ENCODE measurements at regions of chr3 and their contacts with region 1.

Region 1: DNA sequence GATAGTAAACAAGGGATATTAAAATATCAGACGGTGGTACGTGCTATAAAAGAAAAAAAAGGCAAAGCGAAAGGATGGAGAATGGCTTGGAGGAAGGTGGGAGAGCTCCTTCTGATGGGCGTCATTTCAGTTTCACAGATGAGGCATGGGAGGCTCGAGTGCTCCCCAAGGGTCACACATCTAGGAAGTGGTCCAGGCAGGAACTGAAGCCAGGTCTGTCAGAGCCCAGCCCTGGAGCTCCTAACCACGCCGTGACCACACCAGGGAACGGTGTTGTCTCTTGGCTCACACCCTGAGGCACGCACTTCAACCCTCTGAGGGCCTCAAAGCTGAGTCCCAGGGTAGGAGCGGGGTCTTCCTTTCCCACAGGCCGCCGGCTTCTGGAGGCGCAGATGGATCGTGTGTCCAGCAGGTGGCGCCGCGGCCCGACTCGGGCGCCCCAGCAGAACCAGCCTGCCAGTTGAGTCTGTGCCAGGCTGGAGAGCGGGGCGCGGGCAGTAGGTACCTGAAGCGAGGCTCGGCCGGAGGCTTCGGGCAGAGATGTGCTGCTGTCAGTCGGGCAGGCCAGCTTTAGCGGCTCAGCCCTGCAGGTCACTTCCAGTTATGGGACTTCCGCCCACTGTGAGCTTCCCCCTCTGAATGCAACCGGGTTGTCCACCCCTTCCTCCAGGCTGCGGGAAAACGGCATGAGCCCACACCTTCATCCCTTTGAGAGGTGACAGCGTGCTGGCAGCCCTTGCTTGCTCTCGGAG is 68.1 kb downstream of the SLC6A1 start:
- DNase-seq: peak; percentile 56
- H3K4me3 Mint-ChIP-seq: no peak overlapping the region
- H3K27ac Mint-ChIP-seq: no peak overlapping the region
- H3K4me1 Mint-ChIP-seq: peaks cover 3% of the 10 kb centered on the region
- H3K27me3 Mint-ChIP-seq: peaks cover 21% of the 10 kb centered on the region

Region 2: DNA sequence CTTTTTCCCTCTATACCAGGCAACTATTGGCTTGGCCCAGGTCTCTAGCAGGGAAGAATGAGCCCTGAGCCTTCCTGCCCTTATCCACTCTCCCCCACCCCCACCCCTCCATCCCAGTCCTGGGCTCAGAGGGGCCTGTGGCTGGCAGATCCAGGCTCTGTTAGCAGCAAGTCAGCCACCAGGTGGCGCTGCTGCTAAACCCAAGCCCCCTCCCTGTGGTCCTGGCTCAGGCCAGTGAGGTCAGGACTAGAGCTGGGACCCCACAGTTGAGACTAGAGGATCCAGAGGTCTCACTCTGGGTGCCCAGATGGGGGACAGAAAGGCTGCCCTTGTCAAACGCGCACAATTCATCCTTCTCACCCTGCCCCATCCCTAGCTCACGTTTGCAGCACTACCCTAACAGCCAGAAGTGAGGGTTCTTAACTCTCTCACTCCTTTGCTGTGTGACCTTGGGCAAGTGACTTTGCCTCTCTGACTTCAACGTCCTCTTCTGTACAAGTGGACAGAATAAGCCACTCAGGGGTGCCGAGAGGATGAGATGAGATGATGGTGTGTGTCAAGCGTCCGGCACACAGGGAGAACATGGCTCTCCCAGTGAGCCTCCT is 114.9 kb before region 1 on chr3:
- CTCF ChIA-PET with region 1: interaction called, 39 read pairs
- DNase-seq: peak; percentile 72
- H3K4me3 Mint-ChIP-seq: no peak overlapping the region
- H3K27ac Mint-ChIP-seq: no peak overlapping the region
- H3K4me1 Mint-ChIP-seq: no peaks in the 10 kb centered on the region
- H3K27me3 Mint-ChIP-seq: peaks cover 18% of the 10 kb centered on the region

Region 3: DNA sequence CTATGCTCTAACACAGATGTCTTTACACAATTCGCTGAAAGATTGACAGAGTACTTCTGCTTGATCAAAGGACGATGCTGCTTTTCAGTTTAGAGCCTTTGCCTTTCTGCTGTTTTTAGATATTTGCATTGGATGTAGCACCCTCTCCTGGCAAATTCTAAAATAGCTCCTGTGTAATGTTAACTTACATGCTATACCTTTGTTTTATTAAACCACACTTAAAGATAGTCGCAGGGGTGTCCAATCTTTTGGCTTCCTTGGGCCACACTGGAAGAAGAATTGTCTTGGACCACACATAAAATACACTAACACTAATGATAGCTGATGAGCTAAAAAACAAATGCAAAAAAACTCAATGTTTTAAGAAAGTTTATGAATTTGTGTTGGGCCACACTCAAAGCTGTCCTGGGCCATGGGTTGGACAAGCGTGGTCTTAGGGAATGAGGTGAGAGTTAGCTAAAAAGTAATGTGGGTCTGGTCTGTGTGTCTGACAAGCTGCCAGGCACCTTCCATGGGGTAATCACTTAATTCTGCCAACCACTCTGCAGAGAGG is 274.5 kb after region 1 on chr3:
- CTCF ChIA-PET with region 1: interaction called, 39 read pairs
- DNase-seq: peak; percentile 24
- H3K4me3 Mint-ChIP-seq: no peak overlapping the region
- H3K27ac Mint-ChIP-seq: no peak overlapping the region
- H3K4me1 Mint-ChIP-seq: no peaks in the 10 kb centered on the region
- H3K27me3 Mint-ChIP-seq: no peaks in the 10 kb centered on the region

Region 4: GRCh38 chr3:11651900-11652299 is 591.2 kb after region 1 on chr3:
- CTCF ChIA-PET with region 1: interaction called, 18 read pairs
- DNase-seq: no peak
- H3K4me3 Mint-ChIP-seq: no peak overlapping the region
- H3K27ac Mint-ChIP-seq: no peak overlapping the region
- H3K4me1 Mint-ChIP-seq: no peaks in the 10 kb centered on the region
- H3K27me3 Mint-ChIP-seq: peaks cover 15% of the 10 kb centered on the region

Measured in activated naive CD4-positive, alpha-beta T cell treated with anti-CD3 and anti-CD28 coated beads, Interleukin-2, amount 10 ng/mL, durations not matched to agents 7 days and 5 days (primary cell).